IMR-90 (cell line): ENCODE measurements at regions of chr3 and their contacts with region 1.

Region 1: DNA sequence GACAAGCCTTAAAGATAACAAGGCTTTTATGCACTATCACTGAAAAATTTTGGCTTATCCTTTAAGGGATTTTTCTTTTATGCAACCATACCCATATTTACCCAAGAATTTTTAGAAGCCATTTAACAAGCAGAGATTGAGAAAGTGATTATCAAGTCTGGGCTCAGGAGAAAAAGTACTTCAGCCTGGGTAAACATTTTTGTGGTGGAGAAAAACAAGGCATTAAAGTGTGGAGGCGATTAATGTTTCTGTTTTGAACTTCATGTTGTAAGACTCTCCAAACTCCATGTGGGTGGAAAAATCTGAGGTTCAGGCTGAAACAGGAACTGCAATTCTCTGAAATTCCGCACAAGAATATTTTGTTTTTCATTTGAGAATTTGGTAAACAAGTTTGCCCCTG is 260.4 kb upstream of the KCNMB2 start:
- DNase-seq: no peak
- ATAC-seq: no peak
- H3K4me3 ChIP-seq: no peak overlapping the region
- H3K27ac ChIP-seq: no peak overlapping the region
- H3K4me1 ChIP-seq: no peaks in the 10 kb centered on the region; the same call in 1 of the 2 replicates
- H3K27me3 ChIP-seq: no peaks in the 10 kb centered on the region
- CTCF ChIP-seq: no peak
- POLR2A ChIP-seq: no peak
- RAD21 ChIP-seq: no peak

Region 2: DNA sequence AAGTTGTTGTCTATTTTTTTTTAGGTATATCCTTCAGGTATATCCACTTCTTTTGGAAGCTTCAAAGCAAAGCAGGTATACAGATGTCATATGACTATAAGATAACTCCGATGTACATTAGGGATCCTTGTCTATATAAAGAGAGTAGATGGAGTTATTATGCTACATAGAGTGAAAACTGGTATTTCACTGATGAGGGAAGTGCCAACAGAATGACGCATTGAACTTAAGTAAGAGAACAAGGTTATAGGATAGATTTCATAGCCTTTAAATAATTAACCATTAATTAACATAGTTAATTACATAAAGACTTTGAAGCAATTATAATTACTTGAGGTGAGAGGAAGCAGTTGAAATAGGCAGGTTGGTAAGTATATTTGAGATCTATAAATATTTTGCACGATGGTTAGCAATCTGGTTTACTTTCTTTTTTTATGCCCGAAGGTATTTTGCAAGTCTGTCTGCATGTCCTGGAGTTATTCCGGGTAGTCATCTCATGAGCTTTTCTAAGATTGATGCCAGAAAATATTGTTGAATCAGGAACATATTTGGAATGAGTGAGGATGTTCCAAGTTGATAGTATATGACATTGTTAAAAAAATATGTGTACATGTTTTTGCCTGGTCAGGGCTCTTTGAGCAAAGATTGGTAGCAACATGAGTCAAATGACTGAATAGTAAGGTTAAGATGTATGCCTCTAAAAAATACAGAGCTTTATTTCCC is 39.1 kb before region 1 on chr3:
- CTCF ChIA-PET with region 1: no interaction called
- POLR2A ChIA-PET with region 1: no interaction called
- dilution Hi-C with region 1: no loop called
- in situ Hi-C with region 1: no loop called
- intact Hi-C with region 1: no loop called
- DNase-seq: peak; percentile 28
- ATAC-seq: peak; percentile 35; the same call in 1 of the 2 replicates
- H3K4me3 ChIP-seq: no peak overlapping the region
- H3K27ac ChIP-seq: no peak overlapping the region
- H3K4me1 ChIP-seq: no peaks in the 10 kb centered on the region
- H3K27me3 ChIP-seq: no peaks in the 10 kb centered on the region
- CTCF ChIP-seq: no peak
- POLR2A ChIP-seq: no peak
- RAD21 ChIP-seq: no peak

Region 3: GRCh38 chr3:178289544-178290160 is 13.9 kb after region 1 on chr3:
- CTCF ChIA-PET with region 1: interaction called, 11 read pairs
- POLR2A ChIA-PET with region 1: no interaction called
- dilution Hi-C with region 1: no loop called
- in situ Hi-C with region 1: no loop called
- intact Hi-C with region 1: no loop called
- DNase-seq: peak; percentile 32
- ATAC-seq: no peak
- H3K4me3 ChIP-seq: no peak overlapping the region
- H3K27ac ChIP-seq: no peak overlapping the region
- H3K4me1 ChIP-seq: no peaks in the 10 kb centered on the region
- H3K27me3 ChIP-seq: no peaks in the 10 kb centered on the region
- CTCF ChIP-seq: no peak
- POLR2A ChIP-seq: no peak
- RAD21 ChIP-seq: no peak

Region 4: DNA sequence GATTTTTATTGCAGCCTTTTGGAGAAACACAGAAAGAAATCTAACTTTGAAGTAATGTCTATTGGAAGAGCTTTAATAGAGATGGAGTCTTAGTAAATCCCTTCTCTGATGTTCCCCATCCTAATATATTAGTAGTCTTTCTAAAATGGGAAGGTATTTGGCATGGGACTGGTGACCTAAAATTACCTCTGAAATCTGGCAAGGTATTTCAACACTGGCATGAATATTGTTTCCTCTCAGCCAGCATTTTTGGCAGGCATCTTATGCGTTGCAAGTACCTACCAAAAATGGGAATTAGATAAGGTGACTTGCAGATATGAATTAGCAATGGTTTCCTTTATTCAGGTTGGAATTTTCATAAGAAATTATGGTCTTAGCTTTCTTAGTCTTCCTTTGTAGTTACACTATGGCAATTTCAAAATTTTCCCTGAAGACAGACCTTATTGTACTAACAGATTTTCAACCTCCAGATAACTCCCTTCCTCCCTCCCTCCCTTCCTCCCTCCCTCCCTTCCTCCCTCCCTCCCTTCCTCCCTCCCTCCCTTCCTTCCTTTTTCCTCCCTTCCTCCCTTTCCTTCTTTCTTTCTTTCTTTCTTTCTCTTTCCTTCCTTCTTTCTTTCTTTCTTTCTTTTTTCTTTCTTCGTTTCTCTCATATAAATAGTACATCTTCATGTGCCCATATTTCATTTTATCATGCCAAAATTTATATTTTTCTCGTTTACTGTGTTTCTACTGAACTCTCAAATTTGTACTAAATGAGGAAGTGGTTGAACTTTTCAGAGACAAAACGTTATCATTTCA is 92.2 kb after region 1 on chr3:
- CTCF ChIA-PET with region 1: no interaction called
- POLR2A ChIA-PET with region 1: no interaction called
- dilution Hi-C with region 1: no loop called
- in situ Hi-C with region 1: no loop called
- intact Hi-C with region 1: no loop called
- DNase-seq: no peak
- ATAC-seq: no peak
- H3K4me3 ChIP-seq: no peak overlapping the region
- H3K27ac ChIP-seq: no peak overlapping the region
- H3K4me1 ChIP-seq: no peaks in the 10 kb centered on the region
- H3K27me3 ChIP-seq: no peaks in the 10 kb centered on the region
- CTCF ChIP-seq: no peak
- POLR2A ChIP-seq: no peak
- RAD21 ChIP-seq: no peak